K562 (cell line): ENCODE measurements at regions of chr9 and their contacts with region 1.

Region 1: GRCh38 chr9:136093995-136094881 is 851 bp downstream of the NACC2 start:
- DNase-seq: peak; percentile 78 to 87 (median 86)
- ATAC-seq: peak; percentile 69
- H3K4me3 ChIP-seq: peak overlapping the region; percentile 70
- H3K27ac ChIP-seq: peak overlapping the region; percentile 93
- H3K4me1 ChIP-seq: peaks cover 20 to 70% of the 10 kb centered on the region in 2 experiments; a peak in 4 of 5 replicates
- H3K27me3 ChIP-seq: no peaks in the 10 kb centered on the region
- CTCF ChIP-seq: no peak
- EP300 ChIP-seq: no peak
- POLR2A ChIP-seq: peak; percentile 58; the same call in 1 of the 2 replicates
- RAD21 ChIP-seq: no peak

Region 2: DNA sequence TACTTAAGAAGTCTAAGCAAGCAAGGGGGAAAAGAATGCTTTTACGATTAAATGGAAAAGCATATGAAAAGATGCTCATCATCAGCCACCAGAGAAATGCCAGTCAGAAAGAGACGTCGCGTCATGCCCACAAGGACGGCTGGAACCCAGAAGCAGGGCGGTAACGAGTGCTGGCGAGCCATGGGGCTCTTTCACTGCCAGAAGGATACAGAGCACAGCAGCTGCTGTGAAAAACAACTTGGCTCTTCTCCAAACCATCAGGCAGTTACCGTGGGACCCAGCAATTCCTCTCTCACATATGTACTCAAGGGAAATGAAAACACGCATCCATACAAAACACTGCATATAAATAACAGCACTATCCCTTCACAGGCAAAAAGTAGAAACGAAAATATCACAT is 282.4 kb before region 1 on chr9:
- CTCF ChIA-PET with region 1: no interaction called
- POLR2A ChIA-PET with region 1: no interaction called
- in situ Hi-C with region 1: no loop called
- intact Hi-C with region 1: no loop called
- DNase-seq: no peak
- ATAC-seq: no peak
- H3K4me3 ChIP-seq: no peak overlapping the region
- H3K27ac ChIP-seq: no peak overlapping the region
- H3K4me1 ChIP-seq: no peaks in the 10 kb centered on the region
- H3K27me3 ChIP-seq: no peaks in the 10 kb centered on the region
- CTCF ChIP-seq: no peak
- EP300 ChIP-seq: no peak
- POLR2A ChIP-seq: no peak
- RAD21 ChIP-seq: no peak

Region 3: DNA sequence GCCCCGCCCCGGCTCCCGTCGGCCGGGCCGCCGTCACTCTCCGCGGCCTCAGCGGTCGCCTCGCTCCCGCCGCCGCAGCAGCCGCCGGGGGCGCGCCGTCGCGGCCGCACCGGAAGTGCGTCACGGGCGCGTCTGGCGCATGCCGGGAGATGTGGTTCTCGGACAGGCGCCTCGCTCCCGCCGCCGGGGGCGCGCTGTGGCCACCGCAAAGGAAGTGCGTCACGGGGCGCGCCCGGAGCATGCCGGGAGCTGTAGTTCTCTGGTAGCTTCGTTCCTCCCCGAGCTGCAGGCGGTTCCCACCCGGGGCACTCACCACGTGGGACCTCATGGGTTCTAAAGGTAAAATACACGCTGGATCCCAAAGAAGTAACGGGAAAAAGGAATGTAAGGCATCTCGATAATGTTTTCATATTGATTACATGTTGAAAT is 132.9 kb before region 1 on chr9 and contains the start of gene UBAC1:
- CTCF ChIA-PET with region 1: no interaction called
- POLR2A ChIA-PET with region 1: interaction called, 3 read pairs
- in situ Hi-C with region 1: no loop called
- intact Hi-C with region 1: loop called (anchors 10 kb)
- DNase-seq: peak; percentile 92 to 98 (median 95)
- ATAC-seq: peak; percentile 76
- H3K4me3 ChIP-seq: peak within 1 kb of the TSS; percentile 76
- H3K27ac ChIP-seq: peak within 1 kb of the TSS; percentile 89
- H3K4me1 ChIP-seq: peaks cover 16 to 41% of the 10 kb centered on the region in 2 experiments
- H3K27me3 ChIP-seq: no peaks in the 10 kb centered on the region
- CTCF ChIP-seq: peak; percentile 32 to 53 (median 37); a peak in 3 of 6 replicates
- EP300 ChIP-seq: 0 out of 2 replicates have a peak, but pooled peaks have one; percentile 20
- POLR2A ChIP-seq: no peak
- RAD21 ChIP-seq: no peak
- polyA plus RNA-seq, gene UBAC1: 94.0 to 117 TPM

Region 4: GRCh38 chr9:136109351-136110081 is 15.3 kb after region 1 on chr9:
- CTCF ChIA-PET with region 1: no interaction called
- POLR2A ChIA-PET with region 1: interaction called, 9 read pairs
- in situ Hi-C with region 1: no loop called
- intact Hi-C with region 1: loop called (anchors 2 kb)
- DNase-seq: peak; percentile 76 to 87 (median 82)
- ATAC-seq: peak; percentile 82
- H3K4me3 ChIP-seq: peak overlapping the region; percentile 36
- H3K27ac ChIP-seq: peak overlapping the region; percentile 79
- H3K4me1 ChIP-seq: peaks cover 48 to 80% of the 10 kb centered on the region in 2 experiments
- H3K27me3 ChIP-seq: no peaks in the 10 kb centered on the region
- CTCF ChIP-seq: no peak
- EP300 ChIP-seq: no peak
- POLR2A ChIP-seq: peak; percentile 66
- RAD21 ChIP-seq: no peak